Right ventricle myocardium superior (tissue), 1 donor: ENCODE measurements at regions of chr6 and their contacts with region 1.

Region 1: GRCh38 chr6:46090115-46091079 is 39.4 kb upstream of the ENPP4 start:
- DNase-seq: peak; percentile 55
- ATAC-seq: peak; percentile 81

Region 2: GRCh38 chr6:46203391-46204177 is 113.2 kb after region 1 on chr6:
- intact Hi-C with region 1: loop called (anchors 10 kb)
- DNase-seq: no peak
- ATAC-seq: no peak